ENCODE measurements at regions of chr17 and their contacts with region 1.

Region 1: GRCh38 chr17:45048795-45049563 is 2.5 kb downstream of the DCAKD start:
- DNase-seq: no peak
- H3K4me3 ChIP-seq: no peak overlapping the region
- H3K27ac ChIP-seq: no peak overlapping the region
- H3K4me1 ChIP-seq: peaks cover 0 to 8% of the 10 kb centered on the region in 2 donors
- H3K27me3 ChIP-seq: no peaks in the 10 kb centered on the region
- CTCF ChIP-seq: no peak
- POLR2A ChIP-seq: no peak

Region 2: GRCh38 chr17:44981221-44981968 is 67.6 kb before region 1 on chr17:
- intact Hi-C with region 1: loop called (anchors 10 kb)
- DNase-seq: no peak
- H3K4me3 ChIP-seq: no peak overlapping the region
- H3K27ac ChIP-seq: no peak overlapping the region
- H3K4me1 ChIP-seq: peaks cover 0 to 9% of the 10 kb centered on the region in 2 donors
- H3K27me3 ChIP-seq: no peaks in the 10 kb centered on the region
- CTCF ChIP-seq: no peak
- POLR2A ChIP-seq: no peak

Region 3: GRCh38 chr17:45148183-45149036 is 99.4 kb after region 1 on chr17 and contains the start of gene HEXIM1:
- intact Hi-C with region 1: no loop called
- DNase-seq: peak; percentile 99
- H3K4me3 ChIP-seq: peak within 1 kb of the TSS; percentile 74 to 76
- H3K27ac ChIP-seq: peak within 1 kb of the TSS; percentile 99
- H3K4me1 ChIP-seq: peaks cover 7 to 8% of the 10 kb centered on the region in 2 donors
- H3K27me3 ChIP-seq: no peaks in the 10 kb centered on the region
- CTCF ChIP-seq: peak in 1 of 4 experiments; percentile 28
- POLR2A ChIP-seq: peak; percentile 98 to 99
- total RNA-seq, gene HEXIM1: 23.8 to 60.6 (median 26.7) TPM